ENCODE measurements at regions of chr4 and their contacts with region 1.

Region 1: DNA sequence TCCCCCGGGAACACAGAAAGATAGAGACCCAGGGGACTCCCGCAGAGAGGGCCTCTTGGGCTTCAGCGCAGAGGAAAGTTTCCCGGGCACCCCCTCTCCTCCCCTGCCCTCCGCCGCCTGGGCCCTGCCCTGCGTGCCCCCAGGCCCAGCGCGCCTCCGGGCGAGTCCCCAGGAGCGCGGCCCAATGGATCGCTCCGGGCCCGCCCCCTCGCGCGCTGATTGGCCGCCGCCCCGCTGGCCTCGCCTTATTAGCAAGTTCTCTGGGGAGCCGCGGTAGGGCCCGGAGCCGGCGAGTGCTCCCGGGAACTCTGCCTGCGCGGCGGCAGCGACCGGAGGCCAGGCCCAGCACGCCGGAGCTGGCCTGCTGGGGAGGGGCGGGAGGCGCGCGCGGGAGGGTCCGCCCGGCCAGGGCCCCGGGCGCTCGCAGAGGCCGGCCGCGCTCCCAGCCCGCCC is at the start of gene MSX1:
- DNase-seq: peak; percentile 89 to 91
- ATAC-seq: peak; percentile 95 to 98 (median 96)
- H3K4me3 ChIP-seq: peak within 1 kb of the TSS; percentile 83
- H3K27ac ChIP-seq: peak within 1 kb of the TSS; percentile 46
- H3K4me1 ChIP-seq: peaks cover 8% of the 10 kb centered on the region
- H3K27me3 ChIP-seq: peaks cover 0 to 100% (median 64%) of the 10 kb centered on the region in 3 donors
- CTCF ChIP-seq: no peak
- total RNA-seq, gene MSX1: 1.4 to 3.7 (median 3.6) TPM

Region 2: DNA sequence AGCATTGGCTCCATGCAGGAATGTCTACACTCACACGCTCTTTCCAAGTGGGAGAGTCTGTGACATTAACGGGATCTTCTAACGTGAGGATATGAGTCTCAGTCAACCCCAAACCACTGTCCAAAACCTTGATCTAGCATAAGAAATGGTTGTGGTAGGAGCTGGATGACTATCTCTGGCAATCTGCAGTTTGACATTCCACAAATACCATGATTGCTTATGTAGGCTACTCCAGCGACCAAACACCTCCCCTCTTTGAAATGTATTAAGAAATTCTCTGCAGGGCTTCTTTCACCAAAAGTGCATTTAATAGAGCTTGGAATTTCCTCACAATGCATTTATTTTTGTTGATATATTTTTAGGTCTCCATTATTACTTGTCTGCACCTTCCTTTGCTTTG is 303.5 kb before region 1 on chr4:
- intact Hi-C with region 1: loop called in 1 of 2 experiments (anchors 10 kb)
- DNase-seq: no peak
- ATAC-seq: no peak
- H3K4me3 ChIP-seq: no peak overlapping the region
- H3K27ac ChIP-seq: no peak overlapping the region
- H3K4me1 ChIP-seq: no peaks in the 10 kb centered on the region
- H3K27me3 ChIP-seq: no peaks in the 10 kb centered on the region
- CTCF ChIP-seq: no peak

Region 3: GRCh38 chr4:5224340-5224739 is 364.9 kb after region 1 on chr4:
- intact Hi-C with region 1: no loop called
- DNase-seq: no peak
- ATAC-seq: no peak
- H3K4me3 ChIP-seq: no peak overlapping the region
- H3K27ac ChIP-seq: no peak overlapping the region
- H3K4me1 ChIP-seq: no peaks in the 10 kb centered on the region
- H3K27me3 ChIP-seq: no peaks in the 10 kb centered on the region
- CTCF ChIP-seq: no peak